PC-9 (cell line): ENCODE measurements at regions of chr16 and their contacts with region 1.

Region 1: GRCh38 chr16:23917621-23918020 is 81.8 kb downstream of the PRKCB start:
- DNase-seq: no peak
- H3K4me3 ChIP-seq: no peak overlapping the region
- H3K27ac ChIP-seq: no peak overlapping the region
- H3K4me1 ChIP-seq: no peaks in the 10 kb centered on the region
- H3K27me3 ChIP-seq: peaks cover 11% of the 10 kb centered on the region; the same call in 1 of the 2 replicates
- CTCF ChIP-seq: no peak

Region 2: GRCh38 chr16:23826528-23827045 is 91.0 kb before region 1 on chr16:
- CTCF ChIA-PET with region 1: no interaction called
- POLR2A ChIA-PET with region 1: no interaction called
- intact Hi-C with region 1: loop called (anchors 10 kb)
- DNase-seq: no peak
- H3K4me3 ChIP-seq: no peak overlapping the region
- H3K27ac ChIP-seq: no peak overlapping the region
- H3K4me1 ChIP-seq: no peaks in the 10 kb centered on the region
- H3K27me3 ChIP-seq: peaks cover 40% of the 10 kb centered on the region; the same call in 1 of the 2 replicates
- CTCF ChIP-seq: no peak